ENCODE measurements at regions of chr3 and their contacts with region 1.

Region 1: DNA sequence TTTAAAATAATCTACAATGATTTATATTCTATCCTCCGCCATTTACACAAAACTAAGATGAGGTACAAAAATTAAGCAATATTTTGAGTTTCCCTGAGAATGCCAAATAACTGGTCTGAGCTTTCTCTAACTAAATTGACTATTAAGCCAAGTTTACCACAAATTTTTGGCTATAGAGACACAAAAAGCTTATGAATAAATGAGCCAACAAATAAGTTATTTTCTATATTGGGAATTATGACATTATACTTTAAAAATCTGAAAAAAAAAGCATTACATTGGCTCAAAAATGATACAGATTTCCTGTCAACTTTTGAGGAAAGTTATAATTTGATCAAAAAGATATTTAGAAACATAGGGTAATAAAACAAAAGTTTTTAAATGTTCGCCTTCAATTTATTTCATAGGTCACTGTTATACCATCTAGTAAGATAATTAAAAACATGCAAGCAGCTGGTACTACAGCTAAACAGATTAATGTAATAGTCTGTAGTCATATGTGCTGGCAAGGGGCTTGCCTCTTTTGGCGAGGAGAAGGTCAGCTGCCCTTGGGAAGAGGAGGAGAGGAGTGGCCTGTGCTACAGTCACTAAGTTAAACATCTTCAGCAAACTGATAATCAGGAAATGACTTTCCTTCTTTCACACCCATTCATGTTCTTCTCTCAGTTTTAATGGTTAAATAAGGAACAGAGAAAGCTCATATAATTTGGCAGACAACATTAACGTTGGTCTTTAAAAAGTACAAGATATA is 318.5 kb downstream of the TBC1D5 start:
- DNase-seq: no peak
- ATAC-seq: peak in 1 of 2 experiments; percentile 38; a peak in 1 of 6 replicates
- H3K4me3 ChIP-seq: no peak overlapping the region
- H3K27ac ChIP-seq: no peak overlapping the region
- H3K4me1 ChIP-seq: peaks cover 21% of the 10 kb centered on the region
- CTCF ChIP-seq: no peak
- EP300 ChIP-seq: no peak
- POLR2A ChIP-seq: no peak
- RAD21 ChIP-seq: no peak

Region 2: GRCh38 chr3:17412950-17413530 is 10.9 kb before region 1 on chr3:
- CTCF ChIA-PET with region 1: interaction called, 21 read pairs
- POLR2A ChIA-PET with region 1: no interaction called
- DNase-seq: peak; percentile 27 to 74
- ATAC-seq: peak; percentile 78 to 89; a peak in 4 of 6 replicates
- H3K4me3 ChIP-seq: no peak overlapping the region
- H3K27ac ChIP-seq: no peak overlapping the region
- H3K4me1 ChIP-seq: no peaks in the 10 kb centered on the region
- CTCF ChIP-seq: peak; percentile 87
- EP300 ChIP-seq: no peak
- POLR2A ChIP-seq: no peak
- RAD21 ChIP-seq: peak; percentile 78 to 82

Region 3: GRCh38 chr3:17473761-17474160 is 49.8 kb after region 1 on chr3:
- CTCF ChIA-PET with region 1: no interaction called
- POLR2A ChIA-PET with region 1: no interaction called
- DNase-seq: peak in 1 of 2 experiments; percentile 43
- ATAC-seq: no peak
- H3K4me3 ChIP-seq: no peak overlapping the region
- H3K27ac ChIP-seq: peak overlapping the region in 1 of 2 experiments; percentile 9; a peak in 1 of 6 replicates
- H3K4me1 ChIP-seq: peaks cover 35% of the 10 kb centered on the region
- CTCF ChIP-seq: peak; percentile 40; the same call in 2 of the 3 replicates
- EP300 ChIP-seq: no peak
- POLR2A ChIP-seq: no peak
- RAD21 ChIP-seq: peak; percentile 51 to 61

Measured in A549 (cell line).